ENCODE measurements at regions of chr9 and their contacts with region 1.

Region 1: DNA sequence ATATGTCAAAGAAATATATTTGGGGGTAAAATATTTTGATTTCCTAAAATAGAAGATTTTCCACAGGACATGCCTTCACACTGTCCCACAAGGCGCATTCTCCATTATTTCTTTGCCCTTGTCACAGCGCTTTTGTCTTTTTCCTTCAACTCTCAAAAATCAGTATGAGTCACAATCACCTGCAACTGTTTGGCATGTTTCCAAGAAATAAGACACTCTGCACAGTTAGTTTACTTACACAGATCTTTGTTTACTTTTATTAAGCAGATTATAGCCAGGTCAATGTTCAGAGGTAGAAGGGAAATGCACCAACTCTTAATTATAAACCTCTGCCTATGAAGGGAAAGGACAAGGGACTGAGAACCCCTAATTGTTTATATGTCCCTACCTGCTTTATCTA is 9.5 kb downstream of the CEMIP2 start:
- DNase-seq: no peak
- ATAC-seq: no peak
- H3K4me3 Mint-ChIP-seq: no peak overlapping the region
- H3K27ac Mint-ChIP-seq: no peak overlapping the region
- H3K4me1 Mint-ChIP-seq: peaks cover 80% of the 10 kb centered on the region
- H3K27me3 Mint-ChIP-seq: no peaks in the 10 kb centered on the region

Region 2: GRCh38 chr9:71210326-71210725 is 548.5 kb before region 1 on chr9:
- CTCF ChIA-PET with region 1: no interaction called
- POLR2A ChIA-PET with region 1: no interaction called
- intact Hi-C with region 1: no loop called
- DNase-seq: no peak
- ATAC-seq: no peak
- H3K4me3 Mint-ChIP-seq: no peak overlapping the region
- H3K27ac Mint-ChIP-seq: no peak overlapping the region
- H3K4me1 Mint-ChIP-seq: no peaks in the 10 kb centered on the region
- H3K27me3 Mint-ChIP-seq: peaks cover 4% of the 10 kb centered on the region

Region 3: GRCh38 chr9:71683598-71684235 is 75.1 kb before region 1 on chr9:
- CTCF ChIA-PET with region 1: no interaction called
- POLR2A ChIA-PET with region 1: no interaction called
- intact Hi-C with region 1: loop called in 1 of 2 experiments (anchors 2 kb)
- DNase-seq: no peak
- ATAC-seq: no peak
- H3K4me3 Mint-ChIP-seq: no peak overlapping the region
- H3K27ac Mint-ChIP-seq: peak overlapping the region; percentile 3
- H3K4me1 Mint-ChIP-seq: peaks cover 39% of the 10 kb centered on the region
- H3K27me3 Mint-ChIP-seq: no peaks in the 10 kb centered on the region

Region 4: GRCh38 chr9:71710856-71711255 is 47.9 kb before region 1 on chr9:
- CTCF ChIA-PET with region 1: interaction called, 5 read pairs
- POLR2A ChIA-PET with region 1: no interaction called
- intact Hi-C with region 1: loop called in 1 of 2 experiments (anchors 5 kb)
- DNase-seq: no peak
- ATAC-seq: no peak
- H3K4me3 Mint-ChIP-seq: no peak overlapping the region
- H3K27ac Mint-ChIP-seq: no peak overlapping the region
- H3K4me1 Mint-ChIP-seq: peaks cover 17% of the 10 kb centered on the region
- H3K27me3 Mint-ChIP-seq: no peaks in the 10 kb centered on the region